Heart right ventricle (tissue), 16 donors: ENCODE measurements at regions of chr6 and their contacts with region 1.

Region 1: GRCh38 chr6:117938311-117938995 is 31.4 kb downstream of the SLC35F1 start:
- DNase-seq: no peak
- ATAC-seq: no peak
- H3K4me3 ChIP-seq: no peak overlapping the region
- H3K27ac ChIP-seq: no peak overlapping the region
- H3K4me1 ChIP-seq: no peaks in the 10 kb centered on the region
- H3K27me3 ChIP-seq: no peaks in the 10 kb centered on the region
- CTCF ChIP-seq: no peak

Region 2: DNA sequence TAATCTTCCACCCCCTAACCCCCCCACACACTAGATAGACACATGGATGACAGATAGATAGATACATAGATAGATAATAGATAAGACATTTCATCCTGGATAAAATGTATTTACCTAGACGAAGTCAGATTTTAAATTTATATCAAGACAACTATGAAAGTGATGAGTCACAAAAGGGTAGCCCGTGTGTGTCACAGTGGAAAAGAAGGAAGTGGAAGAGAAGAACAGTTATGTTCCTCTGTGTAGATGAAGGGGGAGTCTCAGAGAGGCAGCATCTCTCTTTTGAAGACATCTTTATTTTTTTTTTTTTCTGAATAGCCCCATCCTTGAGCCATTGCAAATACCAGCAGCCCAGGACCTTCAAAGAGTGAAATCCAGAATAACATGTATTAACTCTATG is 794.8 kb before region 1 on chr6:
- intact Hi-C with region 1: no loop called
- DNase-seq: no peak
- ATAC-seq: no peak
- H3K4me3 ChIP-seq: no peak overlapping the region
- H3K27ac ChIP-seq: peak overlapping the region in 3 of 10 donors; percentile 58 to 71 (median 65)
- H3K4me1 ChIP-seq: peaks cover 0 to 27% (median 7%) of the 10 kb centered on the region in 9 donors
- H3K27me3 ChIP-seq: no peaks in the 10 kb centered on the region
- CTCF ChIP-seq: no peak

Region 3: GRCh38 chr6:117890172-117890571 is 48.3 kb before region 1 on chr6:
- intact Hi-C with region 1: loop called in 1 of 10 experiments (anchors 2 kb)
- DNase-seq: no peak
- ATAC-seq: no peak
- H3K4me3 ChIP-seq: no peak overlapping the region
- H3K27ac ChIP-seq: no peak overlapping the region
- H3K4me1 ChIP-seq: no peaks in the 10 kb centered on the region
- H3K27me3 ChIP-seq: peaks cover 0 to 12% (median 0%) of the 10 kb centered on the region in 7 donors
- CTCF ChIP-seq: no peak

Region 4: DNA sequence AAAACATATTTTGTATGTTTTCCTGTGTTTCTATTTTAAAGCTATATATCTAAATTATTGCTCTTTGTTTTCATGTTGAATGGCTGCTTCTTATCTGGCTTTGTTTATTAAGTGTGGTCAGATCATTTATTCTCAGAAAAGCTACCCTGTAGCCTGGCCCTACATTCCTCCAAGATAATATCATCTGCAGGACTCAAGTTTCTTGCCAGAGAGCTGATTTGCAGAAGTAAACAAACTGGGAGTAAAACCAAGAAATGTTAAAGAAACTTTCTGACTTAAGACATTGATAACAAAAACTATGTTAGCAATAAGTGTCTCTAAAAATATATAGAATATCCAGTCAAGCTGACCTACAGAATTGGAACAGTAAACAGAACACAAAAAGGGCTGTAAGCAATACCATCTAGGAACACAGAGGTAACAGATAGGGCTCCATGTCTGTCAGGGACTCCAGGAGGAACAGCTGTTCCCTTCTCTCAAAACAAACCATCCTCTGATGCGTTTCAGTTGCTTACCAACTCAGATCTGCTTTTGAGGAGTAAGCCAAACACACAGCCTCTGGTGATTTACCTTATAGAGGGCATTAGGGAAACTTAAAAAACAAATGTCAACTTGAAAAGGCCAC is 730.4 kb after region 1 on chr6:
- intact Hi-C with region 1: no loop called
- DNase-seq: no peak
- ATAC-seq: peak in 1 of 8 donors; percentile 22
- H3K4me3 ChIP-seq: no peak overlapping the region
- H3K27ac ChIP-seq: peak overlapping the region in 5 of 10 donors; percentile 34 to 46 (median 38)
- H3K4me1 ChIP-seq: peaks cover 0 to 32% (median 14%) of the 10 kb centered on the region in 9 donors
- H3K27me3 ChIP-seq: no peaks in the 10 kb centered on the region
- CTCF ChIP-seq: no peak